ENCODE measurements at regions of chr3 and their contacts with region 1.

Region 1: DNA sequence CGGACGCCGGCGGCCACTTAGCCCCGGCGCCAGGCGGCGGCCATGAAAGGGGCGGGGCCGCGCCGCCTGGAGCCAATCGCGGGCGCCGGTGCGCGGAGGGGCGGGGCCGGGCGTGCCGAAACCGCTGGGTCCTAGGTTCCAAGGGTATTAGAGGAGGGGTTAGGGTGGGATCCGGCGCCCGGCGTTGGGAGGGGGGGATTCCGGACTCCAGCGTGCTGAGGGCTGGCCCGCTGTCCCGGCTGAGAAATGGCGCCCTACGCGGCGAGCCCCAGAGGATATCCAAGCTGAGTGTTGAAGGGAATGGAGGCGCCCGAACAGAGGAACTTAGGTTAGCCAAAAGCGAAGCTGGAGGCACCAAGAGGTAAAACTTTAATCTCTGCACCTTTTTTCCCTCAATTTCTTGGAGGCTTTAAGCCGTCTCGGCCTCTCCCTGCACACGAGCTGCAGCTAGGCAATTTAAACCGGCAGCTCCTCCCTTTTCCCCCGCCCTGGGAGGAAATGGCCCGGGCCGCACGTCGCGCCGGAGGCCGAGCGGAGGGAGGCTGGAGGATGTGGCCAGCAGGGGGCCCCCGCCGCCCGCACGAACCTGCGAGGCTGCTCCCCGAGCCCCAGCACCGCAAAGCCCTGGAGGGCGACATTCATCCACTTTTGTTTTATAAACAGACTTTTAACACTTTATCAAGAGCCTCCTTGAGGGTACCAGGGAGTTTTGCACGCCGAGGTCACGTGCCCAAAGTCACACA is at the start of gene XXYLT1:
- DNase-seq: peak; percentile 96
- ATAC-seq: peak; percentile 86
- H3K4me3 Mint-ChIP-seq: peak within 1 kb of the TSS; percentile 84
- H3K27ac Mint-ChIP-seq: peak within 1 kb of the TSS; percentile 87
- H3K4me1 Mint-ChIP-seq: peaks cover 17% of the 10 kb centered on the region
- H3K27me3 Mint-ChIP-seq: no peaks in the 10 kb centered on the region
- total RNA-seq, gene XXYLT1: 5.4 to 5.7 TPM

Region 2: GRCh38 chr3:194333212-194333980 is 937.9 kb before region 1 on chr3:
- CTCF ChIA-PET with region 1: no interaction called
- POLR2A ChIA-PET with region 1: no interaction called
- intact Hi-C with region 1: no loop called
- DNase-seq: peak; percentile 94
- ATAC-seq: peak; percentile 98
- H3K4me3 Mint-ChIP-seq: peak overlapping the region; percentile 54
- H3K27ac Mint-ChIP-seq: no peak overlapping the region
- H3K4me1 Mint-ChIP-seq: no peaks in the 10 kb centered on the region
- H3K27me3 Mint-ChIP-seq: peaks cover 25% of the 10 kb centered on the region

Region 3: GRCh38 chr3:195259475-195260279 is 11.6 kb before region 1 on chr3:
- CTCF ChIA-PET with region 1: interaction called, 32 read pairs
- POLR2A ChIA-PET with region 1: no interaction called
- intact Hi-C with region 1: no loop called
- DNase-seq: peak; percentile 90
- ATAC-seq: peak; percentile 81
- H3K4me3 Mint-ChIP-seq: peak overlapping the region; percentile 30
- H3K27ac Mint-ChIP-seq: no peak overlapping the region
- H3K4me1 Mint-ChIP-seq: peaks cover 15% of the 10 kb centered on the region
- H3K27me3 Mint-ChIP-seq: no peaks in the 10 kb centered on the region

Region 4: DNA sequence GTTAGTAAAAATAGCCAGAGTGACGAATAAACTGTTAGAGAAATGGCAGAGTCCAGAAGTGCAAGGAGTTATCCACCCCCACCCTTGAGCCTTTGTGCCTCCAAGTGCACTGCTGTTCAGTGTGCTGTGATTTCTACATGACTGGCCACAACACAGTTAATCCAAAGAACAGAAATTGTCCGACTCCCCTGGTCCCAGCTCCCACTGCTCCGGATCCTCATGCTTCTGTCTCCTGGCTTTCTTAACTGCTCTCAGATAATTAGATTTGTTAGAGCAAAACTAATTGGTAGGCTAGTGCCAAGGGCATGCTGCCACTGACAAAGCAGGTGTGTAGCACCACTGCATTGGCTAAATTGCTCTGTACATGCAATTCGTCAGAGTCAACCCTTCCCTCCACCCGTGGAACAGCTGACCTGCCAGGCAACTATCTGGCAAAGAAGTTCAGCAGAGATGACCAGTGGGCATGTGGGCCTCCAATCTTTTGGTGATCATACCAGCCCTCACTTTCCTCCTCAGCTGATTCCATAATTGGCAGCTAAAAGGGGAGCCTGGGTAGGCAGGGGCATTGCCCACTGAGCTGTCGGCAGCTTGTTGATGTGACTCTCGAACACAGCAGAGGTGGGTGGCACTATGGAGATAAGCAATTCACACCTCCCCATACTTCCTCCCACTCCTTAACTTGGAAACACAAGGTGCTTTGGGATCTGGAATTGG is 190.5 kb after region 1 on chr3:
- CTCF ChIA-PET with region 1: interaction called, 11 read pairs
- POLR2A ChIA-PET with region 1: no interaction called
- intact Hi-C with region 1: no loop called
- DNase-seq: no peak
- ATAC-seq: no peak
- H3K4me3 Mint-ChIP-seq: no peak overlapping the region
- H3K27ac Mint-ChIP-seq: no peak overlapping the region
- H3K4me1 Mint-ChIP-seq: peaks cover 9% of the 10 kb centered on the region
- H3K27me3 Mint-ChIP-seq: no peaks in the 10 kb centered on the region

Region 5: DNA sequence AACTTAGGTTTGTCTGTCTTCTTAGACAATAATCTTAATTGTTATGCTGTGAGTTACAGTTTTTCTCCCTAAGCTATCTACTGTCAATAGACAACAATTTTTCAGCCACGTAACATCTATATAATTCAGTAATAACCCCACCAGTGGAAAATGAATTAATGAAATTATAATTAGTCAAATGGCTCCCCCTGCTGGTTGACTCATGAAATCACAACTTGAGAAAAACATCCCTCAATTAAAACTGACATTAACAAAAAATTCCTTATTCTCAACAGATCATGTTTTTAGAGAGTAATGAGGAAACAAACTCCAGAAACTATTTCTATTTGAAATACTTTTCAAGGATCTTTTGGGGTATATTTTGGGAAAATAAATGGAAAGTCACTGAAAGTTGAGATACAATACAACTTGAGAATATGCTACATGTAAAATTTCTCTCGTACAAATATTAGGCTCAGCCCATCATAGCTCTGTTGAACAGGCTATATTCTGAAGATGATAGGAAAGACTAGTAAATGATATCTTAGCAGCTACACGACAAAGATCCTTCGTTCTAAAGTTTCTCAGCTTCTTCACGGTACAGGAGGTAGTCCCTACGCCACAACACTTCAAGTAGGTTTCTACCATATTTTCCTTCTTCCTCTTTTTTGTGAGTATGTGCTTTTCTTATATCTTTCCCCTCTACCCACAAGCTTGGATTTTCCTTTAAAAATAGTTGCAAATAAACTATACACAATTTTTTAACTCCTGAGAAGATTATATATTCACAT is 251.2 kb after region 1 on chr3:
- CTCF ChIA-PET with region 1: interaction called, 113 read pairs
- POLR2A ChIA-PET with region 1: no interaction called
- intact Hi-C with region 1: loop called (anchors 1 kb)
- DNase-seq: peak; percentile 31
- ATAC-seq: no peak
- H3K4me3 Mint-ChIP-seq: no peak overlapping the region
- H3K27ac Mint-ChIP-seq: peak overlapping the region; percentile 59
- H3K4me1 Mint-ChIP-seq: peaks cover 42% of the 10 kb centered on the region
- H3K27me3 Mint-ChIP-seq: no peaks in the 10 kb centered on the region

Region 6: GRCh38 chr3:195549931-195550519 is 278.7 kb after region 1 on chr3:
- CTCF ChIA-PET with region 1: interaction called, 10 read pairs
- POLR2A ChIA-PET with region 1: interaction called, 7 read pairs
- intact Hi-C with region 1: no loop called
- DNase-seq: peak; percentile 83
- ATAC-seq: peak; percentile 59
- H3K4me3 Mint-ChIP-seq: peak overlapping the region; percentile 40
- H3K27ac Mint-ChIP-seq: peak overlapping the region; percentile 86
- H3K4me1 Mint-ChIP-seq: peaks cover 86% of the 10 kb centered on the region
- H3K27me3 Mint-ChIP-seq: no peaks in the 10 kb centered on the region

Region 7: GRCh38 chr3:195587824-195588223 is 316.5 kb after region 1 on chr3:
- CTCF ChIA-PET with region 1: no interaction called
- POLR2A ChIA-PET with region 1: no interaction called
- intact Hi-C with region 1: no loop called
- DNase-seq: no peak
- ATAC-seq: peak; percentile 24
- H3K4me3 Mint-ChIP-seq: no peak overlapping the region
- H3K27ac Mint-ChIP-seq: no peak overlapping the region
- H3K4me1 Mint-ChIP-seq: peaks cover 4% of the 10 kb centered on the region
- H3K27me3 Mint-ChIP-seq: peaks cover 5% of the 10 kb centered on the region

Region 8: DNA sequence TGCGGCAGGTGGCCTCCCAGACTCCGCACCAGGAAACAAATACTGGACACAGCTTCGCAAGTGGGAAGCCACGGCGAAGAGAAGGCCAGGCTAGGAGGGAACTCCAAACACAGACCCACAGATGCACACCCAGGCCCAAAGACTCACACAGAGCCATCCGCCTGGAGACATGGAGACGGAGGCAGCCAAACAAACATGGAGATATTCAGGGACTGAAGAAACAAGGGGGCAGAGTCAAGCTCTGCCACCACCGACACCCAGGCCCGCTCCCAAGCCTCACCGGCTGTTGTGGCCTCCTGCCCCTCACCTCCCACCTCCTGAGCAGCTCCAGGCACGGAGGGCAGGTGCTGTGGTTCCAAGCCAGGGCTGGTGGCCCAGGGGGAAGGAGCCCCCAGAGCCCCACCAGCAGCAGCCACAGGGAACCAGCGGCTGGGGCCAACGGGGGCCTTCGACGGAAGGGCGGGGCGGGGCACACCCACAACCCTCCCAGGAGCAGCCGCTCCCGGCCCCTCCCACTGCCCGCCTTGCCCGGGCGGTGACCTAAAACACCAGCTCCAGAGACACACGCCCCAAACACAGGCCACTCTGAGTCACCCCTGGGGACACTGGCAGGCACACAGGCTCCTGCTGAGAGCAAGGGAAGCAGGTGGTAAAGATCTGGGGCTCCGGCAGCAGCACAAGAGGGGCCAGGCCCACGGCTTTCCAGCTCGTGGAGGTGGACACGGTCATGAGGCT is 605.2 kb after region 1 on chr3:
- CTCF ChIA-PET with region 1: no interaction called
- POLR2A ChIA-PET with region 1: no interaction called
- intact Hi-C with region 1: no loop called
- DNase-seq: peak; percentile 29
- ATAC-seq: peak; percentile 68
- H3K4me3 Mint-ChIP-seq: no peak overlapping the region
- H3K27ac Mint-ChIP-seq: no peak overlapping the region
- H3K4me1 Mint-ChIP-seq: no peaks in the 10 kb centered on the region
- H3K27me3 Mint-ChIP-seq: no peaks in the 10 kb centered on the region

Region 9: GRCh38 chr3:195999896-196000295 is 728.6 kb after region 1 on chr3:
- CTCF ChIA-PET with region 1: no interaction called
- POLR2A ChIA-PET with region 1: no interaction called
- intact Hi-C with region 1: no loop called
- DNase-seq: no peak
- ATAC-seq: no peak
- H3K4me3 Mint-ChIP-seq: no peak overlapping the region
- H3K27ac Mint-ChIP-seq: no peak overlapping the region
- H3K4me1 Mint-ChIP-seq: no peaks in the 10 kb centered on the region
- H3K27me3 Mint-ChIP-seq: peaks cover 15% of the 10 kb centered on the region